Thyroid gland (tissue), 4 donors: ENCODE measurements at regions of chr18 and their contacts with region 1.

Region 1: DNA sequence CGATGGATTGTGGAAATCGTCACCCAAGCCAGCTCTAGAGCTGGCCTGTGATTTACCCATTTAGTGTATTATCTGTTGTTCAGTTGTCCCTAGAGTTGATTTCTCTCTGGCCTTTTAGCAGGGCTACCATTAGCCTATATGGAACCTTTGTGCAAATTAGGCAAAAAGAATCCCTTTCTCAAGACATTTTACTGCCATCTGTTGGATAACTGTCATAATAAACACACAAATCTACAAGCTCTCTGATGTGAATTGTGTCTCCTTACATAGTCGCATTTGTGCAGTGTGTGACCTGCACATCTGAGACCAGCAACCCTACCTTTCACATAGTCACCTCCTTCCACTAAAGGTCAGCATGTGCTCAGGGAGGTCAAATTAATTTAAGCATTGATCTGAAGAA is 34.0 kb downstream of the LOXHD1 start:
- DNase-seq: no peak
- H3K4me3 ChIP-seq: no peak overlapping the region
- H3K27ac ChIP-seq: no peak overlapping the region
- H3K4me1 ChIP-seq: peaks cover 0 to 8% of the 10 kb centered on the region in 2 donors
- H3K27me3 ChIP-seq: no peaks in the 10 kb centered on the region
- CTCF ChIP-seq: peak in 4 of 6 experiments; percentile 26 to 56 (median 32)
- POLR2A ChIP-seq: no peak

Region 2: DNA sequence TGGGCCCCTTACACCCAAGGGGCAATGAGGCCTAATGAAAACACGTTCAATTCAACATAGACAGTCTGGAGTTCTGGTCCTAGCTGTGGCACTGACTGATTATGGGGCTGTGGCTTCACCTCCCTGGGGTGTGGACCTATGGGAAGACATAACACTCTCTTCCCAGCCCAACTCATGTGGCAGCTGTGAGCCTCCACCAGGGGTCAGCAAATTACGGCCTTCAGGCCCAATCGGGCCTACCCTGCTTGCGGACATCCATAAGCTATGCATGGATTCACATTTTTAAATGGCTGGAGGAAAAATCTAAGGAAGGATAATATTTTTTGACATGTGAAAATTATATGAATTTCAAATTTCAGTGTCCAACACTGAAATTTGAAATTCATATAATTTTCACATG is 67.3 kb before region 1 on chr18:
- intact Hi-C with region 1: loop called (anchors 10 kb)
- DNase-seq: peak; percentile 66 to 74
- H3K4me3 ChIP-seq: no peak overlapping the region
- H3K27ac ChIP-seq: no peak overlapping the region
- H3K4me1 ChIP-seq: no peaks in the 10 kb centered on the region
- H3K27me3 ChIP-seq: no peaks in the 10 kb centered on the region
- CTCF ChIP-seq: peak; percentile 53 to 83 (median 70)
- POLR2A ChIP-seq: no peak

Region 3: GRCh38 chr18:46794607-46795006 is 171.6 kb after region 1 on chr18:
- intact Hi-C with region 1: no loop called
- DNase-seq: no peak
- H3K4me3 ChIP-seq: no peak overlapping the region
- H3K27ac ChIP-seq: no peak overlapping the region
- H3K4me1 ChIP-seq: no peaks in the 10 kb centered on the region
- H3K27me3 ChIP-seq: no peaks in the 10 kb centered on the region
- CTCF ChIP-seq: no peak
- POLR2A ChIP-seq: no peak

Region 4: GRCh38 chr18:46917108-46917802 is 294.3 kb after region 1 on chr18 and contains the starts of genes KATNAL2 and PIAS2:
- intact Hi-C with region 1: no loop called
- DNase-seq: peak; percentile 81 to 82
- H3K4me3 ChIP-seq: peak within 1 kb of the TSS; percentile 68 to 93 (median 77)
- H3K27ac ChIP-seq: peak within 1 kb of the TSS; percentile 79 to 99 (median 87)
- H3K4me1 ChIP-seq: peaks cover 8 to 13% of the 10 kb centered on the region in 2 donors
- H3K27me3 ChIP-seq: no peaks in the 10 kb centered on the region
- CTCF ChIP-seq: peak in 1 of 6 experiments; percentile 3
- POLR2A ChIP-seq: peak; percentile 71 to 98
- total RNA-seq, gene KATNAL2: 11.3 to 104 (median 63.3) TPM
- total RNA-seq, gene PIAS2: 38.7 to 81.6 (median 42.3) TPM